GM13977 (cell line): ENCODE measurements at regions of chr11 and their contacts with region 1.

Region 1: GRCh38 chr11:45102810-45103621 is 43.4 kb upstream of the PRDM11 start:
- DNase-seq: peak; percentile 81
- CTCF ChIP-seq: peak; percentile 90

Region 2: GRCh38 chr11:45147017-45147728 is 44.2 kb after region 1 on chr11:
- in situ Hi-C with region 1: no loop called
- DNase-seq: peak; percentile 99
- CTCF ChIP-seq: peak; percentile 2

Region 3: GRCh38 chr11:45180179-45180842 is 77.3 kb after region 1 on chr11:
- in situ Hi-C with region 1: no loop called
- DNase-seq: peak; percentile 38
- CTCF ChIP-seq: no peak

Region 4: GRCh38 chr11:45252134-45252855 is 149.3 kb after region 1 on chr11:
- in situ Hi-C with region 1: no loop called
- DNase-seq: peak; percentile 55
- CTCF ChIP-seq: peak; percentile 52

Region 5: DNA sequence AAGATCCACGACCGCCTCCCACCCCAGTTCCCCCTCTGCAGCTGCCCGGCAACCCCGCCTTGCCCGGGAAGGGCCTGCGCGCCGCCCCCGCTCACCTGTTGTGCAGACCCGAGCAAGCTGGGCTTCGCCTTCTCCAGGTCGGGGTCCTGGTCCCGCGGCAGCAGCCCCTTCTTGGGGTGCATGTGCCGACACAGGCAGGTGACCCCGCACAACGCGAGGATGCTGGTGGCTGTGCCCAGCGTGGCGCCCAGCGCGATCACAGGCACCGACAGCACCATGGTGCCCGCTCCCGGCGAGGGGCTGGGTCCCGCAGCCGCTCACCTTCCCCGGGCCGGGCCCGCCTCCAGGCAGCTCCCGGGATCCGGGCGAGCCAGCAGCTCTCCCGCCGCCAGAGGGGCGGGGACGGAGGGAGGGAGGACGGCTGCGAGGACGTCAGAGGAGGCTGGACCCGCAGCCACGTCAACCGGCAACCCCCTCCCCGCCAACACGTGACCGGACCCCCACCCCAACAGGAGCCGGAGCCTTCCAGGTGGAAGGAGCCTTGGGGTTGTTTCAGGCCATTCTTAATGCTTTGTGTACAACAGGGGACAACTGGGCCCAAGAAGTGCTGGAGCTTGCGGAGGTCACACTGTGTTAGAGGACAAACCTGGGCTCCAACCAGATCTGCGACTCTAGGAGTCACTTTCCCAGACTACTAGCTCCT is 183.1 kb after region 1 on chr11 and contains the start of gene SYT13:
- in situ Hi-C with region 1: loop called (anchors 25 kb)
- DNase-seq: peak; percentile 13
- CTCF ChIP-seq: no peak